A549 (cell line): ENCODE measurements at regions of chr17 and their contacts with region 1.

Region 1: GRCh38 chr17:36629252-36629847 is 28.0 kb downstream of the MRM1 start:
- DNase-seq: peak; percentile 81 to 90
- ATAC-seq: peak; percentile 87 to 95
- H3K4me3 ChIP-seq: no peak overlapping the region
- H3K27ac ChIP-seq: 0 out of 6 replicates have a peak overlapping the region, but pooled peaks of 1 of the 2 experiments have one; percentile 26
- H3K4me1 ChIP-seq: no peaks in the 10 kb centered on the region
- CTCF ChIP-seq: peak; percentile 96
- EP300 ChIP-seq: no peak
- POLR2A ChIP-seq: no peak
- RAD21 ChIP-seq: peak; percentile 98 to 99

Region 2: GRCh38 chr17:36591434-36592315 is 37.7 kb before region 1 on chr17 and contains the start of gene DHRS11:
- CTCF ChIA-PET with region 1: interaction called, 10 read pairs
- POLR2A ChIA-PET with region 1: no interaction called
- DNase-seq: peak; percentile 73 to 97
- ATAC-seq: peak; percentile 94 to 96
- H3K4me3 ChIP-seq: peak within 1 kb of the TSS; percentile 82
- H3K27ac ChIP-seq: peak within 1 kb of the TSS; percentile 75 to 92
- H3K4me1 ChIP-seq: peaks cover 16% of the 10 kb centered on the region
- CTCF ChIP-seq: peak; percentile 21; the same call in 2 of the 3 replicates
- EP300 ChIP-seq: no peak
- POLR2A ChIP-seq: peak; percentile 48
- RAD21 ChIP-seq: peak in 1 of 2 experiments; percentile 30; a peak in 1 of 5 replicates
- polyA plus RNA-seq, gene DHRS11: 7.4 and 9.5 TPM in 2 replicates

Region 3: GRCh38 chr17:36641877-36642845 is 12.8 kb after region 1 on chr17:
- CTCF ChIA-PET with region 1: interaction called, 39 read pairs
- POLR2A ChIA-PET with region 1: no interaction called
- DNase-seq: peak in 1 of 2 experiments; percentile 22
- ATAC-seq: peak; percentile 25 to 61; a peak in 3 of 6 replicates
- H3K4me3 ChIP-seq: peak overlapping the region; percentile 44
- H3K27ac ChIP-seq: peak overlapping the region in 1 of 2 experiments; percentile 43; a peak in 2 of 6 replicates
- H3K4me1 ChIP-seq: no peaks in the 10 kb centered on the region
- CTCF ChIP-seq: no peak
- EP300 ChIP-seq: no peak
- POLR2A ChIP-seq: no peak
- RAD21 ChIP-seq: no peak

Region 4: DNA sequence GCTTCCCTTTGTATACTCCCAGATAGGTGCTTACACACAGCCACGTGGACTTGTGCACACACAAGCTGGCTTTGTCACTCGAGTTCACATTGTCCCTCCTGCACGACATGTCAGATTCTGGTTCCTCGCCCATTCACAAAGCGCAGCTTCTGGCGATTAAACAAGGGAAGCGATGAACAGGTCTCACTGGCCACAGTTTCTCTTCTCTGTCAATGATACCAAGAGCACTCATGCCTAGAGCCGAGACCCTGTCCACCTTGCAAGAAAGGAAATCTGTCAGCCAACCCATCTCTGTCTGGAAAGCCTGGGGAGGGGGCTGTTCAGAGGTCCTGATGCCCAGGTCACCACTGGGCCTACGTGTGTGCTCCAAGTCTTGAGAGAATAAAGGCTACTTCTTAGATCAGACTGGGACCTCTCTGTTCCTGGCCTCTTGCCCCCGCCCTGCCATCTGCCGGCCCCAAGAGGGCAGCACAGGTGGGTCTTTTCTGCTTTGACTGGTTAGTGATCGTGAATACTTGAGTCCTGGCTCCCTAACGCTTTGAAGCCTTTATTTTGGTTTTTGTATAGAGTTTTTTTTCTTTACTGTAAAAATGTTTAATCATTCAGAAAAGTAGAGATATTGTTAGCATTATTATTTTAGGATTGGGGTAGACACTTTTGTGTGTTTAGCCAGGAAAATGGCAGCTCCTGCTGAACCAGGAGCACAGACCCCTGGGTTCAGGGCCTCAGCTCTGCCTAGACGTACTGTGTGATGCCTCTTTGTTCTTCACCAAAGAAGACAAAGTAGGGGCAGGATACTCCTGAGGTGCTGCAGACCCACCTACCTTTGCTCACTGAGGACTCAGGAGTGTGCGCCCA is 76.8 kb after region 1 on chr17:
- CTCF ChIA-PET with region 1: interaction called, 37 read pairs
- POLR2A ChIA-PET with region 1: no interaction called
- DNase-seq: peak; percentile 72 to 89
- ATAC-seq: peak; percentile 84 to 94
- H3K4me3 ChIP-seq: no peak overlapping the region
- H3K27ac ChIP-seq: no peak overlapping the region
- H3K4me1 ChIP-seq: no peaks in the 10 kb centered on the region
- CTCF ChIP-seq: peak; percentile 81
- EP300 ChIP-seq: no peak
- POLR2A ChIP-seq: 0 out of 2 replicates have a peak, but pooled peaks have one; percentile 10
- RAD21 ChIP-seq: peak; percentile 76 to 83

Region 5: GRCh38 chr17:37239690-37240334 is 610.5 kb after region 1 on chr17:
- CTCF ChIA-PET with region 1: interaction called, 53 read pairs
- POLR2A ChIA-PET with region 1: no interaction called
- DNase-seq: peak; percentile 21 to 38
- ATAC-seq: peak; percentile 57 to 64; a peak in 4 of 6 replicates
- H3K4me3 ChIP-seq: no peak overlapping the region
- H3K27ac ChIP-seq: no peak overlapping the region
- H3K4me1 ChIP-seq: 0 out of 3 replicates have a peak, but pooled peaks cover 6% of the 10 kb centered on the region
- CTCF ChIP-seq: peak; percentile 86
- EP300 ChIP-seq: no peak
- POLR2A ChIP-seq: no peak
- RAD21 ChIP-seq: peak; percentile 44 to 60